ENCODE measurements at regions of chr15 and their contacts with region 1.

Region 1: DNA sequence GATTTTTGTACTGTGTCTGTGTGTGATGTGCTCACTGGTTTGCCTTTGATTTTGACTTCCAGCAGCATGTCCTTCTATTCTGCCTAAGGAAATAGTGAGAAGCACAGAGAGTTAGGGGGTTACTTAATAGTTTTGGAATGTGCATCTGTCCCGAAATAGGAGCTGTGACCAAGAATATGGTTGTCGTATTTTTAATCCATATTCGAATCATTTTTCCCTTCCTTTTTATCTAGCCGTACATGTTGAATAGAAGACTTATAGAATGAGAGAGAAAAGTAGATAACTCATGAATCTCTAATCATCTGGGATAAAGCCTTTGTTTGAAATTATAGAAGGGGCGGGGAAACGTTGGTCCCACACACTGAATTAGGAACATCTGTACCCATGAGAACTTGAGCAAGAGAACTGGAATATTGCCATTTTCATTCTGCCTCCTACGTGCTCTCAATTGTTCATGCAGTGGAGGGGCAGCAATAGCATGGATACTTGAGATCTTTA is 23.6 kb downstream of the CRTC3 start:
- DNase-seq: no peak
- H3K4me3 Mint-ChIP-seq: no peak overlapping the region
- H3K27ac Mint-ChIP-seq: peak overlapping the region; percentile 0
- H3K4me1 Mint-ChIP-seq: peaks cover 44% of the 10 kb centered on the region
- H3K27me3 Mint-ChIP-seq: no peaks in the 10 kb centered on the region

Region 2: GRCh38 chr15:90565866-90566265 is 12.6 kb after region 1 on chr15:
- intact Hi-C with region 1: loop called (anchors 2 kb)
- DNase-seq: no peak
- H3K4me3 Mint-ChIP-seq: peak overlapping the region; percentile 48
- H3K27ac Mint-ChIP-seq: peak overlapping the region; percentile 68
- H3K4me1 Mint-ChIP-seq: peaks cover 81% of the 10 kb centered on the region
- H3K27me3 Mint-ChIP-seq: no peaks in the 10 kb centered on the region